Naive thymus-derived CD4-positive, alpha-beta T cell (primary cell): ENCODE measurements at regions of chr1 and their contacts with region 1.

Region 1: DNA sequence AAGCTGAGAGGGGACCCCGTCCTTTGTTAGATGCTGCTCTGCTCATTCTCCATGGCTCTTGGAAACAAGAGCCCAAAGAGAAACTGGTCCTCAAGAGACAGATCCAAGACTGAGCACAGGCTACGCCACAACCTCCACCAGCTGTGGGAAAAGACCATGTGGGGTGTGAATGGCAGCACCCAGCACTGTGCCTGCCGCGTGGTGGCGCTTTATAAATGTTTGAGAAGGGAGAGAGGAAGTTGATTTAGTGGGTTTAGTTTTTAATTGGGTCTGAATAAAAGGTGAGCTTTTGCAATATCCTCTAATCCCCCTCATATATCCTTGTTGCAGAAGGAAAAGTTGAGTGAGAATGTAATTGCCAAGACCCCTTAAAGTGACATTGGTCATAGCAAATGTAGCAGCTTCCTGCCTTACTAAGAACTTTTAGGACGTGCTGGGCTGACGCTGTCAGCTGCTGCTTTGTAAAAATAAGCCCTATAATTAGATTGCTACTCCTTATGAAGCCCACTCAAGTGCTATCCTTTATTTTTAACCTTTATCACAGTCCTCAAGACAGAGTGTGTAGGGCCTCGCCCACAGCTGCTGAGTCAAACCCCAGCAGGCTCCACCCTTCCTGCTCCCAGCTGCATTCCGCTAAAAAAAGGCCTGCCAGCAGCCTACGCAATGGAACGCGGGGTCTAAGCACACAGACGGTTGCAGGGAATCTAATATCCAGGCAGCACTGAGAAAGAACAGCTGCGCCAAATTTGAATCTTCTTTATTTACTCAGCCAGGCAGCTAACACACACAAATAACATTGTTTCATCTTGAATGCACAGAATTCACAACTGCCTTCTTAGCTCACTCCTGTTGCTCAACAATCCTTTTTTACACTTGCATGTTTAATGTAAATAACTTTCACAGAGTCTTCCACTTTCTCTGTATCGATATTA is 47.4 kb upstream of the PRDX6 start:
- DNase-seq: peak; percentile 36 to 66 (median 54)
- ATAC-seq: peak; percentile 87
- H3K4me3 ChIP-seq: peak overlapping the region; percentile 9
- H3K4me3 Mint-ChIP-seq: peak overlapping the region; percentile 29 to 76 (median 60)
- H3K27ac ChIP-seq: peak overlapping the region; percentile 43
- H3K27ac Mint-ChIP-seq: peak overlapping the region; percentile 23 to 86 (median 51)
- H3K4me1 ChIP-seq: peaks cover 14% of the 10 kb centered on the region in 2 donors
- H3K4me1 Mint-ChIP-seq: peaks cover 13 to 35% (median 24%) of the 10 kb centered on the region in 7 donors
- H3K27me3 ChIP-seq: no peaks in the 10 kb centered on the region
- H3K27me3 Mint-ChIP-seq: no peaks in the 10 kb centered on the region

Region 2: DNA sequence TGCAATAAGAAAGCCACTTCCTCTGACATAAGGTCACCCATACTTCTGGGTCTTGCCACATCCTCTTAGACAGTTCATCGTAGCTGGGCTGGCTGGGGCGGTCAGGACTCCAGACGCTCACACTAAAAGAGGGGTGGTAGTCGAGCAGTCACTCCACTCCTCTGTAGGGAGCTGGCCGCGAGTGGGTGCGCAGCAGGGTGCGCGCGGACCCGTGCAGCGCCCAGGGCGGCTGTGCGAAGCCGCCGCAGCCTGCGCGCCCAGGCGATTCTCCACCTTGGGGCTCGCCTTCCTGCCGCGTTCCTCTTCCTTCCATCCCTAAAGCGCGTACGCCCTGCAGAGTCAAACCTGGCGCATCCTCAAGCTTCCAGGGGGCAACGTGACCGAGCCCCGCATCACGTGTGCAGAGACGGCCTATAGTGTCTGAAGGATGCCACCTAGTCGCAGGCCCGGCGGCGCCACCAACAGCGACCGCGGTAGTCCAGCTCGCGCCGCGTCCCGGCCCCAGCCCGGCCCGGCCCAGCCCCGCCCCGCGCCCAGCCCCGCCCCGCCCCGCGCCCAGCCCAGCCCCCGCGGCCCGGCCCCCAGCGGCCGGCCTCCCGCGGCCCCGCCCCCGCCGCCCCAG is 47.0 kb after region 1 on chr1:
- CTCF ChIA-PET with region 1: interaction called, 3 read pairs
- POLR2A ChIA-PET with region 1: interaction called, 12 read pairs
- intact Hi-C with region 1: loop called (anchors 1 kb)
- DNase-seq: peak; percentile 65 to 82 (median 78)
- ATAC-seq: peak; percentile 87
- H3K4me3 ChIP-seq: peak overlapping the region; percentile 92
- H3K4me3 Mint-ChIP-seq: peak overlapping the region; percentile 82 to 94 (median 91)
- H3K27ac ChIP-seq: peak overlapping the region; percentile 78
- H3K27ac Mint-ChIP-seq: peak overlapping the region; percentile 61 to 96 (median 89)
- H3K4me1 ChIP-seq: peaks cover 20 to 31% of the 10 kb centered on the region in 2 donors
- H3K4me1 Mint-ChIP-seq: peaks cover 38 to 72% (median 63%) of the 10 kb centered on the region in 7 donors
- H3K27me3 ChIP-seq: no peaks in the 10 kb centered on the region
- H3K27me3 Mint-ChIP-seq: no peaks in the 10 kb centered on the region

Region 3: GRCh38 chr1:173628888-173629287 is 199.2 kb after region 1 on chr1:
- CTCF ChIA-PET with region 1: interaction called, 5 read pairs
- POLR2A ChIA-PET with region 1: no interaction called
- intact Hi-C with region 1: loop called (anchors 1 to 5 kb)
- DNase-seq: peak in 1 of 9 donors; percentile 5
- ATAC-seq: no peak
- H3K4me3 ChIP-seq: no peak overlapping the region
- H3K4me3 Mint-ChIP-seq: no peak overlapping the region
- H3K27ac ChIP-seq: no peak overlapping the region
- H3K27ac Mint-ChIP-seq: peak overlapping the region in 1 of 9 donors; percentile 3
- H3K4me1 ChIP-seq: no peaks in the 10 kb centered on the region
- H3K4me1 Mint-ChIP-seq: peaks cover 0 to 2% (median 0%) of the 10 kb centered on the region in 7 donors
- H3K27me3 ChIP-seq: no peaks in the 10 kb centered on the region
- H3K27me3 Mint-ChIP-seq: peaks cover 0 to 8% (median 5%) of the 10 kb centered on the region in 5 donors

Region 4: DNA sequence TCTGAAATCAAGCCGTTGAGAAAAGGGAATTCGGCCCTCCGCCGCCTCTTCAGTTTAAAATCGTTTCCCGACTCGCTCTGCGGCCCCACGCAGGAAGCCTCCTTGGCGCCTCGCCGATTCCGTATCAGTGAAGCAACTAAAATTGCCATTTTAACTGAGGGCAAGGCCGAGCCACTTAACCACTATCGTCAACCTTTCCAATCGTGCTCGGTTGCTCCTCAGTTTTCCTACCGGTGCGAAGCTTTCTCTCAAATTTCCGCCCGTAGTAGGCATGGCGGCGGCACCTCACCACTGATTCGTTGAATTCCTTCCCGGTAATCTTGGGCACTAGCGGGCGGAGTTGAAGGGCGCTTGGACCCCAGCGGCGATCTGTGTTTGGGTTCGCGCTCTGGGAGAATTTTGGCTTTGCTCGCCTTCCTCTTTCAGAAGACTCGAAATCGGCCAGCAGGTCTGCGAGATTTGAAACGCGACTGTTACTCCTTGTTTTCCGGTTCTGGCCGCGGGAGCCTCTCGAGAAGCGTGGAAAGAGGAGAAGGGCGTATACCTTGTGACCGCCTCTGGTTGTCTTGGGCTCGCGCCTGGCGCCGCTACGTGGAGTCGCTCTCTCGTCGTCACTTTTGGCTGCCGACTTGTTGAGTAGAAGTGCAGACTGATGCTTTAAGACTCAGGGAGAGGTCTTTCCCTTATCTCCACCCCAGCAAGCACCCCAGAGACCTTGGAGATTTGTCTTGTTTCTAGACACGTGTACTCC is 394.8 kb after region 1 on chr1 and contains the starts of genes CENPL and DARS2:
- CTCF ChIA-PET with region 1: interaction called, 36 read pairs
- POLR2A ChIA-PET with region 1: interaction called, 10 read pairs
- intact Hi-C with region 1: loop called (anchors 1 kb)
- DNase-seq: peak; percentile 67 to 93 (median 91)
- ATAC-seq: peak; percentile 94
- H3K4me3 ChIP-seq: peak within 1 kb of the TSS; percentile 99
- H3K4me3 Mint-ChIP-seq: peak within 1 kb of the TSS; percentile 87 to 99 (median 94)
- H3K27ac ChIP-seq: peak within 1 kb of the TSS; percentile 80
- H3K27ac Mint-ChIP-seq: peak within 1 kb of the TSS; percentile 91 to 98 (median 96)
- H3K4me1 ChIP-seq: peaks cover 10 to 14% of the 10 kb centered on the region in 2 donors
- H3K4me1 Mint-ChIP-seq: peaks cover 32 to 68% (median 50%) of the 10 kb centered on the region in 7 donors
- H3K27me3 ChIP-seq: no peaks in the 10 kb centered on the region
- H3K27me3 Mint-ChIP-seq: no peaks in the 10 kb centered on the region
- total RNA-seq, gene CENPL: 5.2 to 25.1 (median 9.5) TPM
- total RNA-seq, gene DARS2: 3.6 to 26.0 (median 13.5) TPM

Region 5: GRCh38 chr1:173946380-173946921 is 516.7 kb after region 1 on chr1:
- CTCF ChIA-PET with region 1: no interaction called
- POLR2A ChIA-PET with region 1: no interaction called
- intact Hi-C with region 1: loop called in 1 of 2 experiments (anchors 5 kb)
- DNase-seq: no peak
- ATAC-seq: no peak
- H3K4me3 ChIP-seq: no peak overlapping the region
- H3K4me3 Mint-ChIP-seq: no peak overlapping the region
- H3K27ac ChIP-seq: no peak overlapping the region
- H3K27ac Mint-ChIP-seq: peak overlapping the region in 2 of 9 donors; percentile 14 to 51
- H3K4me1 ChIP-seq: no peaks in the 10 kb centered on the region
- H3K4me1 Mint-ChIP-seq: no peaks in the 10 kb centered on the region
- H3K27me3 ChIP-seq: no peaks in the 10 kb centered on the region
- H3K27me3 Mint-ChIP-seq: no peaks in the 10 kb centered on the region

Region 6: GRCh38 chr1:174743654-174744561 is 1314.2 kb after region 1 on chr1:
- CTCF ChIA-PET with region 1: no interaction called
- POLR2A ChIA-PET with region 1: no interaction called
- intact Hi-C with region 1: loop called in 1 of 2 experiments (anchors 10 kb)
- DNase-seq: peak in 5 of 9 donors; percentile 29 to 53 (median 36)
- ATAC-seq: peak; percentile 47
- H3K4me3 ChIP-seq: no peak overlapping the region
- H3K4me3 Mint-ChIP-seq: no peak overlapping the region
- H3K27ac ChIP-seq: no peak overlapping the region
- H3K27ac Mint-ChIP-seq: no peak overlapping the region
- H3K4me1 ChIP-seq: no peaks in the 10 kb centered on the region
- H3K4me1 Mint-ChIP-seq: peaks cover 0 to 18% (median 13%) of the 10 kb centered on the region in 7 donors
- H3K27me3 ChIP-seq: no peaks in the 10 kb centered on the region
- H3K27me3 Mint-ChIP-seq: peaks cover 0 to 5% (median 0%) of the 10 kb centered on the region in 5 donors